CD4-positive, alpha-beta T cell (primary cell): ENCODE measurements at regions of chr11 and their contacts with region 1.

Region 1: GRCh38 chr11:313787-314547 is at the start of gene IFITM1:
- DNase-seq: peak in 13 of 14 experiments; percentile 40 to 89 (median 70)
- ATAC-seq: peak; percentile 62
- H3K4me3 ChIP-seq: peak within 1 kb of the TSS; percentile 90
- H3K4me3 Mint-ChIP-seq: peak within 1 kb of the TSS; percentile 97
- H3K27ac ChIP-seq: peak within 1 kb of the TSS; percentile 82 to 93
- H3K27ac Mint-ChIP-seq: peak within 1 kb of the TSS; percentile 98
- H3K4me1 ChIP-seq: peaks cover 56% of the 10 kb centered on the region
- H3K4me1 Mint-ChIP-seq: peaks cover 50% of the 10 kb centered on the region
- H3K27me3 ChIP-seq: no peaks in the 10 kb centered on the region
- H3K27me3 Mint-ChIP-seq: no peaks in the 10 kb centered on the region
- CTCF ChIP-seq: no peak
- total RNA-seq, gene IFITM1: 286 to 306 TPM

Region 2: DNA sequence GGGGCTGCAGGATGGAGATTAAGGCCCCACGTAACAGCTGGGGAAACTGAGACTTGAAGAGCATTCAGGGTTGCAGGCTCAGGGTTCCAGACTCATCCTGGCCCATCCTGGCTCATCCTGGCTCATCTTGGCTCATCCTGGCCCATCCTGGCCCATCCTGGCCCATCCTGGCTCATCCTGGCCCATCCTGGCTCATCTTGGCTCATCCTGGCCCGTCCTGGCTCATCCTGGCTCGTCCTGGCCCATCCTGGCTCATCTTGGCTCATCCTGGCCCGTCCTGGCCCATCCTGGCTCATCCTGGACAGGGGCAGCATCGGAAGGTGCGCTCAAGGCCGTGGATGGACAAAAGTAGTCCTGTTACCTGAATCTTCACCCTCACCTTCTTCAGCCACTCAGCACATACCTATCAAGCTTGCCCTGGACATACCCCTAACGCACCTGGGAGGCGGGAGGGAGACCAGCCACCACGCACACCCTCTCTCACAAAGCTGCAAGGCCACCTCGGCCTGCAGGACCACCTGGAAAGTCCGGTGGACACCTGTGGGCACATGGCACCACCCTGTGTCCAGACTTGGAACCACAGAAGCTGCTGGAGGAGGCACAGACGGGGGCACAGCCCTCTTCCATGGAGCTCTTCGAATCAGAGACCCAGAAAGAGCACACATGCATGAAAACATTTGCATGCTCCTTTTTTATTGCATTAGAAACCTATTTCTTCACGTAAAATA is 56.0 kb before region 1 on chr11:
- CTCF ChIA-PET with region 1: no interaction called
- POLR2A ChIA-PET with region 1: no interaction called
- intact Hi-C with region 1: no loop called
- DNase-seq: no peak
- ATAC-seq: no peak
- H3K4me3 ChIP-seq: no peak overlapping the region
- H3K4me3 Mint-ChIP-seq: no peak overlapping the region
- H3K27ac ChIP-seq: no peak overlapping the region
- H3K27ac Mint-ChIP-seq: no peak overlapping the region
- H3K4me1 ChIP-seq: no peaks in the 10 kb centered on the region
- H3K4me1 Mint-ChIP-seq: no peaks in the 10 kb centered on the region
- H3K27me3 ChIP-seq: no peaks in the 10 kb centered on the region
- H3K27me3 Mint-ChIP-seq: no peaks in the 10 kb centered on the region
- CTCF ChIP-seq: no peak

Region 3: GRCh38 chr11:279966-280582 is 33.9 kb before region 1 on chr11:
- CTCF ChIA-PET with region 1: interaction called, 5 read pairs
- POLR2A ChIA-PET with region 1: interaction called, 26 read pairs
- intact Hi-C with region 1: no loop called
- DNase-seq: peak in 10 of 14 experiments; percentile 37 to 78 (median 51)
- ATAC-seq: peak; percentile 69
- H3K4me3 ChIP-seq: peak overlapping the region; percentile 53
- H3K4me3 Mint-ChIP-seq: peak overlapping the region; percentile 92
- H3K27ac ChIP-seq: no peak overlapping the region
- H3K27ac Mint-ChIP-seq: peak overlapping the region; percentile 81
- H3K4me1 ChIP-seq: peaks cover 56% of the 10 kb centered on the region
- H3K4me1 Mint-ChIP-seq: peaks cover 61% of the 10 kb centered on the region
- H3K27me3 ChIP-seq: peaks cover 10 to 18% of the 10 kb centered on the region in 2 experiments
- H3K27me3 Mint-ChIP-seq: peaks cover 12% of the 10 kb centered on the region
- CTCF ChIP-seq: no peak

Region 4: GRCh38 chr11:288328-289144 is 25.4 kb before region 1 on chr11 and contains the start of gene PGGHG:
- CTCF ChIA-PET with region 1: no interaction called
- POLR2A ChIA-PET with region 1: interaction called, 40 read pairs
- intact Hi-C with region 1: no loop called
- DNase-seq: peak in 11 of 14 experiments; percentile 18 to 75 (median 57)
- ATAC-seq: peak; percentile 10
- H3K4me3 ChIP-seq: peak within 1 kb of the TSS; percentile 82
- H3K4me3 Mint-ChIP-seq: peak within 1 kb of the TSS; percentile 91
- H3K27ac ChIP-seq: peak within 1 kb of the TSS; percentile 72 to 98
- H3K27ac Mint-ChIP-seq: peak within 1 kb of the TSS; percentile 93
- H3K4me1 ChIP-seq: peaks cover 42% of the 10 kb centered on the region
- H3K4me1 Mint-ChIP-seq: peaks cover 34% of the 10 kb centered on the region
- H3K27me3 ChIP-seq: peaks cover 0 to 5% of the 10 kb centered on the region in 2 experiments
- H3K27me3 Mint-ChIP-seq: peaks cover 4% of the 10 kb centered on the region
- CTCF ChIP-seq: no peak
- total RNA-seq, gene PGGHG: 670 to 671 TPM

Region 5: DNA sequence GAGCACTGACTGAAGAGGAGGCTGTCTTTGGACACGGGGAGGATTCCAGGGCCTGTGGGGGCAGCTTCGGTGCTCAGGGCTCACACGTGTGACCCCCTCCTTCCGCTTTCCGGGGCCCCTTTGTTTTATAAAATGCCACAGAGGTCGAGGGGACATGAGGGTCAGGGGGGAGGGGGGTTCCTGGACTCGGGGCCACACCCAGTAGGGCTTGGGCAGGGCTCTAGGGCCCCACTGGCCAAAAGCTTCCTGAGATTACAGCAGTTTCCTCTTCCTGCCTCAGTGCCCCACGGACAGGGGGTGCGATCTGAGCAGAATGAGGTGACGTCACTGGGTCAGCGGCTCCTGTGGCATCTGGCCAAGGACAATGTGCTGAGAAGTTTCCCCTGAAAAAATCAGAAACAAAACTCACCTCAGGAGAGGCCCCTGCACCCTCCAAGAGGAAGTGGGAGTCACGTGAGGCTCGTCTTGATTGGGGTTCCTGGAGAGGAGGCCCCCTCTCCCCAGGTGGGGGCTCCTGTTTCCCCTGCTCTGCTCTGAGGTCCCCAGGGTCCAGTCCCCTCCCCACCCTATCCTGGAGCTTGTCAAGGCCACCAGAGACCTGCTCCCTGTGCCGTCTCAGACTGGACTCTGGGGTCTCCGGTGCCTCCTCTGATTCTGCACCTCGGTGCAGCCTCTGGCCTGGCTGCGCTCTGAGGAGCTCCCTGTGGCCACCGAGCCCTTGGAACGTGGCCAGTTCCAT is 13.0 kb after region 1 on chr11:
- CTCF ChIA-PET with region 1: no interaction called
- POLR2A ChIA-PET with region 1: interaction called, 17 read pairs
- intact Hi-C with region 1: no loop called
- DNase-seq: peak in 8 of 14 experiments; percentile 50 to 90 (median 69)
- ATAC-seq: peak; percentile 60
- H3K4me3 ChIP-seq: peak overlapping the region; percentile 12
- H3K4me3 Mint-ChIP-seq: peak overlapping the region; percentile 59
- H3K27ac ChIP-seq: peak overlapping the region; percentile 71 to 89
- H3K27ac Mint-ChIP-seq: peak overlapping the region; percentile 83
- H3K4me1 ChIP-seq: peaks cover 73% of the 10 kb centered on the region
- H3K4me1 Mint-ChIP-seq: peaks cover 67% of the 10 kb centered on the region
- H3K27me3 ChIP-seq: no peaks in the 10 kb centered on the region
- H3K27me3 Mint-ChIP-seq: no peaks in the 10 kb centered on the region
- CTCF ChIP-seq: no peak

Region 6: DNA sequence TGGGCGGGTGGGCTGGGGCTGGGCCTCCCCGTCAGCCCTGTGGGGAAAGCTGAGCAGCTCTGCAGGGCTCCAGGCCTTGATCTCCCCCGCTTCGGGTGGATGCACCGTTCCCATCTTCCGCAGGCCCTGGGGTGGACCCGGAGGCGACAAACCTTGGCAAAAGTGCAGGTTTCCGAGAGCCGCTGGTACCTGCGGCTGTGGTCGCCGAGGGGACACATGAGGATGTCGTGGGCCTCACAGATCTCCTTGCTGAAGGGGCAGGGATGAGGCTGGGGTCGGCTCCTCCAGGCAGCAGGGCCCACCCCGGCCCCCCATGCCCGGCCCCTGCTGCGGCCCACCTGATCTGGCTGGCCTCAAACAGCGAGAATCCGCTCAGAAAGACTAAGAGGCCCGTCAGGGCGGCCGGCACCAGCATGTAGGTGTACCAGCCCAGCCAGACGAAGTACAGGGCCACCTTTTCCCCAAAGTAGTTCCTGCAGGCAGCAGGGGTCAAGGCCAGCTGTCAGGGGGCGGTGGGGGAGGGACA is 116.0 kb after region 1 on chr11:
- CTCF ChIA-PET with region 1: no interaction called
- POLR2A ChIA-PET with region 1: no interaction called
- intact Hi-C with region 1: no loop called
- DNase-seq: no peak
- ATAC-seq: no peak
- H3K4me3 ChIP-seq: no peak overlapping the region
- H3K4me3 Mint-ChIP-seq: no peak overlapping the region
- H3K27ac ChIP-seq: no peak overlapping the region
- H3K27ac Mint-ChIP-seq: no peak overlapping the region
- H3K4me1 ChIP-seq: no peaks in the 10 kb centered on the region
- H3K4me1 Mint-ChIP-seq: no peaks in the 10 kb centered on the region
- H3K27me3 ChIP-seq: no peaks in the 10 kb centered on the region
- H3K27me3 Mint-ChIP-seq: no peaks in the 10 kb centered on the region
- CTCF ChIP-seq: no peak

Region 7: GRCh38 chr11:749731-750130 is 435.8 kb after region 1 on chr11:
- CTCF ChIA-PET with region 1: no interaction called
- POLR2A ChIA-PET with region 1: no interaction called
- intact Hi-C with region 1: no loop called
- DNase-seq: no peak
- ATAC-seq: no peak
- H3K4me3 ChIP-seq: no peak overlapping the region
- H3K4me3 Mint-ChIP-seq: peak overlapping the region; percentile 72
- H3K27ac ChIP-seq: no peak overlapping the region
- H3K27ac Mint-ChIP-seq: no peak overlapping the region
- H3K4me1 ChIP-seq: peaks cover 23% of the 10 kb centered on the region
- H3K4me1 Mint-ChIP-seq: peaks cover 18% of the 10 kb centered on the region
- H3K27me3 ChIP-seq: no peaks in the 10 kb centered on the region
- H3K27me3 Mint-ChIP-seq: no peaks in the 10 kb centered on the region
- CTCF ChIP-seq: no peak